Activated CD4-positive, alpha-beta memory T cell treated with anti-CD3 and anti-CD28 coated beads, Interleukin-2, amount 10 ng/mL, durations not matched to agents 7 days and 5 days (primary cell): ENCODE measurements at regions of chr15 and their contacts with region 1.

Region 1: DNA sequence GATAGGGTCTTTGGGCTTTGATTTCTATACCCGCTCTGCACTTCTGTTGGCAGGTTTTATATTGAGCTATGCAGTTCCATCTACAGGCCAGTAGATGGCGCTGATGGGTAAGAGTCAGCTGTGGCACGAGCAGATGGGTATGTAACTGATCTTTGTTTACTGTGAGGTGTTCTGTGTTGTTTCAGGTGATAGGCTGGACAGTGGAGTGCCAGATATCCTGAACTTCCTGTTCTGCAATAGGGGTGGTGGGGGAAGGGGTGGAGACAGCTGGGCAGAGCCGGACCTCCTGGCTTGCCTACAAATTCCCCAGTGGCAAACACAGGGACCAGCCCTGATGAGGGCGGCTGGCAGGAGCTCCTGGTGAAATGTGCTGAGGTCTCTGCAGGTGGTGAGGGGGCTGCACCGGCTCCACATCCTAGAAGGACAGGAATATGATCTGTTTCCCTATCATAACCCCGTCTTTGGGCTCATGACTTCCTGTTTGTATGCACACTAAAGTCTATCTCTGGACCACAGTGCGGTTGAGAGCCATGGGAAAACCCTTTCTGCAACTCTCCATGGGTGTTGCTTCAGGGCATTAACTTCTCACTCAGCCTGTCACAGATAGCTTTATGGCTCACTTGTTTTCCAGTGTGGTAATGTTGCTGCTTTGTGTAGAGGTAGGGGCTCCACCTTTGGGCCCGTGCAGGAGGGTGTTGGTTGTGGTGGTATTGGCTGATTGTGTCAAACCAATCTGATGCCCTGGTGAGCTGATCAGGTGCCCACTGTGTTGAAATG is 13.4 kb upstream of the FAM98B start:
- DNase-seq: peak; percentile 60
- H3K4me3 Mint-ChIP-seq: no peak overlapping the region
- H3K27ac Mint-ChIP-seq: no peak overlapping the region
- H3K4me1 Mint-ChIP-seq: peaks cover 11% of the 10 kb centered on the region
- H3K27me3 Mint-ChIP-seq: peaks cover 41% of the 10 kb centered on the region

Region 2: DNA sequence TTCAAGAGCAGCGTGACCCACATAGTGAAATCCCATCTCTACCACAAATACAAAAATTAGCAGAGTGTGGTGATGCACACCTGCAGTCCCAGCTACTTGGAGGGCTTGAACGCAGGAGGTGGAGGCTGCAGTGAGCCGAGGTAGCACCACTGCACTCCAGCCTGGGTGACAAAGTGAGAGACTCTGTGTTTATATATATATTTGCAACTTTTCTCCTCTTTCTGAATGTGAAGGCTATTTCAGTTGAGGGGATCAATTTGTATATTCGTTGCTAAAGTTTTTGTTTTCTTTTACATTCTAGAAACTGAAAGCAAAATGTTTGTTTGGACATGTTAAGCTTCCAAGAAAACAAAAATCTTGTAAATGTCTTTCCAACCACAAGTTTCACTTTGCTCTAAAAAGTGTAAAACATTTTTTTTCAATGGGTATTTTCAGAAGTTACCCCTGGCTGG is 16.4 kb before region 1 on chr15:
- CTCF ChIA-PET with region 1: interaction called, 10 read pairs
- POLR2A ChIA-PET with region 1: no interaction called
- DNase-seq: no peak
- H3K4me3 Mint-ChIP-seq: no peak overlapping the region
- H3K27ac Mint-ChIP-seq: no peak overlapping the region
- H3K4me1 Mint-ChIP-seq: peaks cover 12% of the 10 kb centered on the region
- H3K27me3 Mint-ChIP-seq: peaks cover 38% of the 10 kb centered on the region

Region 3: DNA sequence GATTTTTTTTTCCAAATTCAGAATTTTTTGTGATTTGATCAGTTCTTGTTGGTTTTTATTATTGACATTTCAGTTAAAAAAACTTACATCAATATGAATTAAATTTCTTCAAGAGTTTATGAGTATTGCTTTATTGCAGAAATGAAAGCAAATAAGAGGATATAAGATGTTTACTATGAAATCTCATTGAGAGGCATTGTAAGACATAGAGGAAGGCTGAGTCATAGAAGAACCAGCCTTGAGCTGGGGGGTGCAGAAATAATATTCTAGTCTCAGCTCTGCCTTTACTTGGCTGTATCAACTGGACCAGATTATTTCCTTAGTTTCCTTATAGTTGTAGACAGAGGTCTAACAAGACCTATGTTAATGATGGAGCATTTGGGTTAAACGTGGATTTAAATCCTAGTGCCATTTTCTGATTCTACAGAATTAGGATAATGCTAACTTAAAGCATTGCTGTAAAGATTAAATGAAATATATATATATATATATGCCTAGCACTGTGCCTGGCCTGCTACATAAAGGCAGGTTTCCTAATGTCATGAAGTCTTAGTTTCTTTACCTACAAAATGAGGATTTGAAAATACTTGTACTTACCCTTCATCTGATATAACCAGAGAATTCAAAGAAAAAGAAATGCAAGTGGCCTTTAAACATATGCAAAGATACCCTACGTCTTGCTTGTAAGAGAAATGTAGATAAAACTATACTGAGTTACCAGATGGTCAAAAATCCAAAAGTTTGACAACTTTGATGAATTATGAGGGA is 20.7 kb after region 1 on chr15:
- CTCF ChIA-PET with region 1: interaction called, 17 read pairs
- POLR2A ChIA-PET with region 1: no interaction called
- DNase-seq: no peak
- H3K4me3 Mint-ChIP-seq: no peak overlapping the region
- H3K27ac Mint-ChIP-seq: no peak overlapping the region
- H3K4me1 Mint-ChIP-seq: peaks cover 38% of the 10 kb centered on the region
- H3K27me3 Mint-ChIP-seq: no peaks in the 10 kb centered on the region

Region 4: GRCh38 chr15:38683382-38684242 is 243.1 kb after region 1 on chr15:
- CTCF ChIA-PET with region 1: interaction called, 63 read pairs
- POLR2A ChIA-PET with region 1: no interaction called
- DNase-seq: peak; percentile 81
- H3K4me3 Mint-ChIP-seq: peak overlapping the region; percentile 54
- H3K27ac Mint-ChIP-seq: peak overlapping the region; percentile 99
- H3K4me1 Mint-ChIP-seq: peaks cover 75% of the 10 kb centered on the region
- H3K27me3 Mint-ChIP-seq: no peaks in the 10 kb centered on the region

Region 5: DNA sequence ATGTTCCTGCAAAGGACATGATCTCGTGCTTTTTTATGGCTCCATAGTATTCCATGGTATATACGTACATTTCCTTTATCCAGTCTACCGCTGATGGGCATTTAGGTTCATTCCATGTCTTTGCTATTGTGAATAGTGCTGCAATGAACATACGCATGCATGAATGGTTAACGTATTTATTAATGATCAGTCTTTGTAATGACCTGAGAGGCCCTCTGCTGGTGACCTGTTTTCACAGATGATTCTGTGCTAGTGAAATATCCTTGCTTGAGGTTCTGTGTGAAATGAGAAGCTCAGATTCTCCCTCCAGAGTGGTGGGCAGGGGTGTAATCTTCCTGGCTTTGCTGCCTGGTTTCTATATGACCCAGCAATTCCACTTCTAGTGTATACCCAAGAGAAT is 284.3 kb after region 1 on chr15:
- CTCF ChIA-PET with region 1: interaction called, 15 read pairs
- POLR2A ChIA-PET with region 1: no interaction called
- DNase-seq: no peak
- H3K4me3 Mint-ChIP-seq: no peak overlapping the region
- H3K27ac Mint-ChIP-seq: no peak overlapping the region
- H3K4me1 Mint-ChIP-seq: no peaks in the 10 kb centered on the region
- H3K27me3 Mint-ChIP-seq: peaks cover 4% of the 10 kb centered on the region